ENCODE measurements at regions of chr17 and their contacts with region 1.

Region 1: DNA sequence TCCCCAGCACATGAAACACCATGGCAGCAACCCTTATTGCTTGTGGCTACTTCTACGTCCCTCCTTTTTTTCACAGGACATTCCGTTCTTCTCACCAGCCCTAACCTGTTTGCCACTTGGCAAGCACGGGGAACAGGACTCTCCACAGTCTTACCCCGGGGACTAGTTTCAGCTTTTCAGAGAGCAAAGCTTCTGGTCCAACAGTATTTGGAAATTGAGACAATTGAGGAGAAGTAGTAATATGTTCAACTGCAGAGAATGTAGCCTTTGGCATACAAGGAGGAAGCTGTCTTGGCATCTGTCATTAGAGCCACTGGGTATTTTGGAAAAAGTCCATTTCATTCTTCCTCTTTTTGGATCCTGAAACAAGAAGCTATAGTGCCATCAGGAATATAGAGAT is 65.7 kb downstream of the MAP2K6 start:
- DNase-seq: no peak
- ATAC-seq: no peak
- H3K4me3 ChIP-seq: no peak overlapping the region
- H3K4me3 Mint-ChIP-seq: peak overlapping the region in 1 of 10 donors; percentile 17
- H3K27ac ChIP-seq: no peak overlapping the region
- H3K27ac Mint-ChIP-seq: no peak overlapping the region
- H3K4me1 ChIP-seq: no peaks in the 10 kb centered on the region
- H3K4me1 Mint-ChIP-seq: peaks cover 3 to 48% (median 37%) of the 10 kb centered on the region in 7 donors
- H3K27me3 ChIP-seq: no peaks in the 10 kb centered on the region
- H3K27me3 Mint-ChIP-seq: no peaks in the 10 kb centered on the region

Region 2: GRCh38 chr17:69430488-69430887 is 49.8 kb before region 1 on chr17:
- CTCF ChIA-PET with region 1: no interaction called
- POLR2A ChIA-PET with region 1: no interaction called
- intact Hi-C with region 1: loop called in 1 of 2 experiments (anchors 5 kb)
- DNase-seq: no peak
- ATAC-seq: no peak
- H3K4me3 ChIP-seq: no peak overlapping the region
- H3K4me3 Mint-ChIP-seq: peak overlapping the region in 2 of 10 donors; percentile 25 to 53
- H3K27ac ChIP-seq: no peak overlapping the region
- H3K27ac Mint-ChIP-seq: peak overlapping the region in 3 of 9 donors; percentile 14 to 78 (median 72)
- H3K4me1 ChIP-seq: no peaks in the 10 kb centered on the region
- H3K4me1 Mint-ChIP-seq: peaks cover 24 to 88% (median 77%) of the 10 kb centered on the region in 7 donors
- H3K27me3 ChIP-seq: no peaks in the 10 kb centered on the region
- H3K27me3 Mint-ChIP-seq: no peaks in the 10 kb centered on the region

Region 3: DNA sequence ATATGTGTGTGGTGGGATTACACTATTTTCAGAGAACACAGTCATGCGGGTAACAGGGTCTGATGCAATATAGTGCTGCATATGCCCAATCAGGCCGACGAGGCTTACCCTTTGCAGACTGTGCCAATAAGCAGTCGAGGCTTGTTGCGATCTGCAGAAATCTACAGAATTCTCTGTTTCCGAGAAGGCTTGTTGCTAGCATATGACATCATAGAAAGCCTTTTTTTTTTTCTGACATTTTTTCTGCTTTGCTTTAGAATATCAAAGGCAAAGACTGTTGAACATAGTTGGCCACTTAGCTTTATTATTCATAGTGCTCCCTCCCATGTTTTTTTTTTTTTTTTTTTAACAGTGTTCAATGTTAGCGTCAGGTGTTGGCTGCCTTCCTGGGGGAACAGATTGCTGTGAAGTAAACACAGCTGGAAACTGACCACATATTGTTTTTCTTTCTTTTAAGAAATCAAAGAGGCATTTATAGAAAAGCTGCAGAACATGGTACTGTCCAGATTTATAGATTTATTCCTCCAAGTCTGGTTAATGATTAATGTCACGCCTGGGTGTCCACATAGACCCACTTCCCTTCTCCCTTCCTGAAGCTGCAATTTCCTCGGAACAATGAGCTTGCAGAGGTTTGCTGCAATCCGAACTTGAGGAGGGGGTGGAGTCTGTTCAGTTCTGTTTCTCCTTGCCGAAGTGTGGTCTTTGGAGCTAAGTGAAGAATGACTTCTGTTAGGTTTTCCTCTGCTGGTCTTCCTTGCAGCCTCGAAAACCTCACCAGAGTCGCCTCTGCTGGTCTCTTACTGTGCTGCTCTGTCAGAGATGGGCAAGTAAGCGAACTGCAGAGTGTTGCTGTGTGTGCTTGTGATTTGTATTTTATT is 21.6 kb after region 1 on chr17:
- CTCF ChIA-PET with region 1: no interaction called
- POLR2A ChIA-PET with region 1: no interaction called
- intact Hi-C with region 1: no loop called
- DNase-seq: no peak
- ATAC-seq: peak; percentile 52
- H3K4me3 ChIP-seq: no peak overlapping the region
- H3K4me3 Mint-ChIP-seq: peak overlapping the region in 3 of 10 donors; percentile 2 to 8 (median 2)
- H3K27ac ChIP-seq: no peak overlapping the region
- H3K27ac Mint-ChIP-seq: peak overlapping the region in 7 of 9 donors; percentile 3 to 76 (median 13)
- H3K4me1 ChIP-seq: no peaks in the 10 kb centered on the region
- H3K4me1 Mint-ChIP-seq: peaks cover 4 to 69% (median 58%) of the 10 kb centered on the region in 7 donors
- H3K27me3 ChIP-seq: no peaks in the 10 kb centered on the region
- H3K27me3 Mint-ChIP-seq: no peaks in the 10 kb centered on the region

Region 4: DNA sequence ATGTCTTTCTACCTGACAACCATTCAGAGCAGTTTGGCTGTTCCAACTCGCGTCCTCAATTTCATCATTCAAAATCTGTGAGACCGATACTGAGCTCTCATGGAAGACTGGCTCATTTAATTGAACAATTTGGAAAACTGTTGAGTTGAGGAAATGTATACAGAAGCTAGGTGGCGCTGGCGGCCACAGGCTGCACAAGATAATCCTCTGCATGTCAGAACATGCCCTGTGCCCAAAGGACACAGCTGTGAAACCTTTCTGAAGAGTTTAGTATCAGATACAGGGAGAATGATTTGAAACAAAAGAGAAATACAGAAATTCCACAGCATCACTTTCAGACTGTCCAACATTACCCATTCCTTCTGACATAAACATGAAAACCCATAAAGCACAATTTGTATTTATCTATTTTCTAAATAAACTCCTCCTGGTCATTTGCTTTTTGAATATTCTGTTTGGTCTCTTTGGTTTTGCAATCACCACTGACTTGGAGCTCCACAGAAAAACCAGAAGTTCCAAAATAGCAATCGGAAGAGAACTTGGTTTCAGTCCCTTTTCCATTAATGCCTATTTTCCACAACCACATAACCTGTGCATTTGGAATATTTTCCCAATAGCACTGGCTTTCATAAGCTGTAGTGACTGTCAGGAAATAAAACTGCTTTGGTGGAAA is 127.1 kb after region 1 on chr17:
- CTCF ChIA-PET with region 1: no interaction called
- POLR2A ChIA-PET with region 1: no interaction called
- intact Hi-C with region 1: no loop called
- DNase-seq: peak in 1 of 9 donors; percentile 22
- ATAC-seq: no peak
- H3K4me3 ChIP-seq: no peak overlapping the region
- H3K4me3 Mint-ChIP-seq: peak overlapping the region in 1 of 10 donors; percentile 36
- H3K27ac ChIP-seq: no peak overlapping the region
- H3K27ac Mint-ChIP-seq: peak overlapping the region in 1 of 9 donors; percentile 77
- H3K4me1 ChIP-seq: peaks cover 0 to 6% of the 10 kb centered on the region in 2 donors
- H3K4me1 Mint-ChIP-seq: peaks cover 8 to 42% (median 10%) of the 10 kb centered on the region in 7 donors
- H3K27me3 ChIP-seq: no peaks in the 10 kb centered on the region
- H3K27me3 Mint-ChIP-seq: peaks cover 0 to 18% (median 10%) of the 10 kb centered on the region in 5 donors

Measured in naive thymus-derived CD4-positive, alpha-beta T cell (primary cell).